ENCODE measurements at regions of chr21 and their contacts with region 1.

Region 1: DNA sequence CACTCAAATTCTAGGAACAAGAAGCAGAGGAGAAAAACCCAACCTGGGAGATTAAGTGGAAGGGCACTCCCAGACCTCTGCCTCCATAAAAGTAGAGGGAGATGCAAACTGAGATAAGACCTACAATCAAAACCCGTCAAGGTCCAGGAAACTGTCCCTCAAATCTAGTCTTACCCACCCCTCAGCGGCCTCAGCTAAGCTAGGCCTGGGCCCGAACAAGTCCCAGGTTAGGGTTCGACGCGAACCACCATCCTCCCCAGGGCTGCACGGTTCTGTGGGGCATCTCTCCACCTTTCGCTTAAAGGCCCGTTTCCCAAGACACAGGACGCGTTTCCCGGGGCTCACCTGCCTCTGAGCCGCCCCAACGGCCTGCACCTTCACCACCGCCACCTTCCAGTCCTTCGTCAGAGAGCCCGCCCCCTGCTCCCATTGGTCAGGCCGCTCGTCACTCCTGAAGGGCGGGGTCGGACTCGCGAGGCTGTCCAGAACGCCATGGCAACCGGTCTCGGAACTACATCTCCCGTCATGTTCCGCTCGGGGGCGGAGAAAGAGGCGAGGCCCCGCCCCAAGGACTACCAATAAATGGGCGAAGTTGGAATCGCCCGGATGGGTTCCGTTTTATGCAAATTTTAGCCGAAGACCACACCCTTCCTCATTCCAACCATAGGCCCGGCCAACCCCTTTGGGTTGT is at the start of gene CRYZL1:
- DNase-seq: peak; percentile 99 to 100
- H3K4me3 ChIP-seq: peak within 1 kb of the TSS; percentile 86
- H3K4me3 Mint-ChIP-seq: peak within 1 kb of the TSS; percentile 75
- H3K27ac Mint-ChIP-seq: peak within 1 kb of the TSS; percentile 91
- H3K4me1 ChIP-seq: peaks cover 18% of the 10 kb centered on the region
- H3K4me1 Mint-ChIP-seq: peaks cover 12% of the 10 kb centered on the region
- H3K27me3 ChIP-seq: no peaks in the 10 kb centered on the region
- H3K27me3 Mint-ChIP-seq: no peaks in the 10 kb centered on the region
- CTCF ChIP-seq: no peak
- total RNA-seq, gene CRYZL1: 26.6 and 29.1 TPM in 2 replicates

Region 2: DNA sequence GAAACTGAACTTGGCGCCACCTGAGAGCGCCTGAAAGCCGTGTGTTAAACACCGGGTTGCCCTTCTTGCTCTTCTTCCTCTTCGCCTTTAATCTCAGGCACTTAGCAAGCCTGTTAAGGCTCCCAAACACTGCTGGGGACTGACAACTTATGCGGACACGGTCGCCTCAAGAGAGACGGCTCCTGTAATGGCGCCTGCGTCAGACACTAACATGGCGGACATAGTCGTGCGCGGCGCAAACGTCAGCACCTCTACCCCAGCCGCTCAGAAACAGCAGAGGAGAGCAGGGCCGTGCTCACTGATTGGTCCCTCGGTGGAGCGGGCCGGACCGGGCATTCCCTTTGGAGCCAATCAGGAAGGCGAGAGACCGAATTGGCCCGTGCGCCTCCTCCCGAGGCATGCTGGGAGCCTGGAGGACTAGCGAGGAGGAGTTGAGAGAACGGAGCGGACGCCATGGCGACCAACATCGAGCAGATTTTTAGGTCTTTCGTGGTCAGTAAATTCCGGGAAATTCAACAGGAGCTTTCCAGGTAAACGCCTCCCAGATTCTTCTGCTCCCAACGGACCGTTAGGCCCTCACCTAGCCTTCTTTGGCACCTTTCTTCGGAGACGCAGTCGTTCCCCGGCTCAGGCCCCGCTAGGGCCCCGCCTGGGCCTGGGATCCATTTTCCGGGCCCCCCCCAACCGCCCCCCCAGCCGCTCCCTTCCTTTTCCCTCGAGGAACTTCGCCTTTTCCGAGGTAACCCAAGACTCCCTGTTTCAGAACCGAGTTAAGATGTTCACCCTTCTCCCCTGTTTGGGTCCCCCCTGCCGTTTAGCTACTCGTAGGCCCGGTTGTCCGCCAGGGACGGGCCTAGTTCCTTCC is 98.6 kb before region 1 on chr21 and contains the start of gene SON:
- CTCF ChIA-PET with region 1: no interaction called
- POLR2A ChIA-PET with region 1: no interaction called
- intact Hi-C with region 1: loop called (anchors 1 kb)
- DNase-seq: peak; percentile 98 to 99
- H3K4me3 ChIP-seq: peak within 1 kb of the TSS; percentile 74
- H3K4me3 Mint-ChIP-seq: peak within 1 kb of the TSS; percentile 82
- H3K27ac Mint-ChIP-seq: peak within 1 kb of the TSS; percentile 98
- H3K4me1 ChIP-seq: peaks cover 19% of the 10 kb centered on the region
- H3K4me1 Mint-ChIP-seq: peaks cover 9% of the 10 kb centered on the region
- H3K27me3 ChIP-seq: no peaks in the 10 kb centered on the region
- H3K27me3 Mint-ChIP-seq: no peaks in the 10 kb centered on the region
- CTCF ChIP-seq: no peak
- total RNA-seq, gene SON: 220 and 273 TPM in 2 replicates

Region 3: DNA sequence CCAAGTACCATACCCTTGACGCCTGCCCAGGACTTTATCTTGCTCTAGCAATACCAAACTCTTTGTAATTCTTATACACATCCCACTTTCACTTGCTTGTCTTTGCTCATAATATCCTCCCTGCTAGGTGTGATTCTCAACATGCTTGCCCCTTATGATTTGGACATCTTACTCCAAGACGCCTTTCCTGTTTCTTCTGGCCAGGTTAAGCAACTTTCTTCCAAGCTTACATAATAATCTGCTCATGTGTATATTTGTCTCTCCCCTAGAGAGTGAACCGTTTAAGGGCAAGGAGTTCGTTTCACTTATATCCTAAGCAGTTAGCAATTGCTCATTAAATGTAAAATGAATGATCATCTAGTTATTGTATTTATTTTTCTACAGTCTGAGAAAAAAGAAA is 21.8 kb before region 1 on chr21:
- CTCF ChIA-PET with region 1: no interaction called
- POLR2A ChIA-PET with region 1: no interaction called
- intact Hi-C with region 1: loop called (anchors 1 kb)
- DNase-seq: no peak
- H3K4me3 ChIP-seq: no peak overlapping the region
- H3K4me3 Mint-ChIP-seq: no peak overlapping the region
- H3K27ac Mint-ChIP-seq: no peak overlapping the region
- H3K4me1 ChIP-seq: peaks cover 36% of the 10 kb centered on the region
- H3K4me1 Mint-ChIP-seq: peaks cover 17% of the 10 kb centered on the region
- H3K27me3 ChIP-seq: no peaks in the 10 kb centered on the region
- H3K27me3 Mint-ChIP-seq: no peaks in the 10 kb centered on the region
- CTCF ChIP-seq: no peak

Region 4: DNA sequence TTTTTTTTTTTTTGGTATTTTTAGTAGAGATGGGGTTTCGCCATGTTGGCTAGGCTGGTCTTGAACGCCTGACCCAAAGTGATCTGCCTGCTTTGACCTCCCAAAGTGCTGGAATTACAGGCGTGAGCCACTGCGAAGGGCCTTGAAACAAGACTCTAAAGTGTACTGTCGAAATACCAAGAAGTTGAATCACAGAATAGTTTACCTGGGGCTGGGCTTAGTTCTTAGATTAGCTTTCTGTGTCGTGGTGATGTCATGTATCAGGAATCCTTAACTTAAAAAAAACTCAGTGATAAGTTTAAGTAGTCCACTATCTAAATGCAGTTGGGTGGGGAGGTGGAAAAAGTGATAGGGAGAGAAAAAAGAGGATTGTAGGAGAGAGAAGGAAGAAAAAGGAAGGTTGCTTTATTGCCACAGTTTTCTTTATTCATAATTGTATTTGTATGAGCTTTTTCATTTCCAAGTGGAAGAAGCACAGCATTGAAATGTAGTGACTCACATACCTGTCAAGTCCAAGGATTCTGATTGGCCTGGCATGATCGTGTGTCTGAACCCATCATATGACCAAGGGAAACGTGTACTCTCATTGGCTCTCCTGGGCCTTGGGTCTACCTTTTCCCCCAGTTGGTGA is 14.2 kb after region 1 on chr21:
- CTCF ChIA-PET with region 1: interaction called, 3 read pairs
- POLR2A ChIA-PET with region 1: no interaction called
- intact Hi-C with region 1: loop called (anchors 2 kb)
- DNase-seq: peak; percentile 77 to 87
- H3K4me3 ChIP-seq: no peak overlapping the region
- H3K4me3 Mint-ChIP-seq: peak overlapping the region; percentile 61
- H3K27ac Mint-ChIP-seq: peak overlapping the region; percentile 91
- H3K4me1 ChIP-seq: peaks cover 68% of the 10 kb centered on the region
- H3K4me1 Mint-ChIP-seq: peaks cover 41% of the 10 kb centered on the region
- H3K27me3 ChIP-seq: no peaks in the 10 kb centered on the region
- H3K27me3 Mint-ChIP-seq: no peaks in the 10 kb centered on the region
- CTCF ChIP-seq: no peak

Region 5: GRCh38 chr21:33682992-33683627 is 41.6 kb after region 1 on chr21:
- CTCF ChIA-PET with region 1: no interaction called
- POLR2A ChIA-PET with region 1: no interaction called
- intact Hi-C with region 1: loop called (anchors 2 kb)
- DNase-seq: peak; percentile 56 to 60
- H3K4me3 ChIP-seq: no peak overlapping the region
- H3K4me3 Mint-ChIP-seq: peak overlapping the region; percentile 52
- H3K27ac Mint-ChIP-seq: peak overlapping the region; percentile 86
- H3K4me1 ChIP-seq: peaks cover 73% of the 10 kb centered on the region
- H3K4me1 Mint-ChIP-seq: peaks cover 55% of the 10 kb centered on the region
- H3K27me3 ChIP-seq: no peaks in the 10 kb centered on the region
- H3K27me3 Mint-ChIP-seq: no peaks in the 10 kb centered on the region
- CTCF ChIP-seq: no peak

Region 6: GRCh38 chr21:33761441-33762036 is 120.1 kb after region 1 on chr21:
- CTCF ChIA-PET with region 1: no interaction called
- POLR2A ChIA-PET with region 1: no interaction called
- intact Hi-C with region 1: loop called (anchors 5 kb)
- DNase-seq: peak in 1 of 2 experiments; percentile 37
- H3K4me3 ChIP-seq: no peak overlapping the region
- H3K4me3 Mint-ChIP-seq: no peak overlapping the region
- H3K27ac Mint-ChIP-seq: peak overlapping the region; percentile 81
- H3K4me1 ChIP-seq: peaks cover 24% of the 10 kb centered on the region
- H3K4me1 Mint-ChIP-seq: peaks cover 22% of the 10 kb centered on the region
- H3K27me3 ChIP-seq: no peaks in the 10 kb centered on the region
- H3K27me3 Mint-ChIP-seq: no peaks in the 10 kb centered on the region
- CTCF ChIP-seq: no peak